ENCODE measurements at regions of chr7 and their contacts with region 1.

Region 1: GRCh38 chr7:66920769-66921395 is at the start of gene TMEM248:
- DNase-seq: peak; percentile 96
- ATAC-seq: peak; percentile 90
- H3K4me3 Mint-ChIP-seq: peak within 1 kb of the TSS; percentile 99
- H3K27ac Mint-ChIP-seq: peak within 1 kb of the TSS; percentile 98
- H3K4me1 Mint-ChIP-seq: peaks cover 33% of the 10 kb centered on the region
- H3K27me3 Mint-ChIP-seq: no peaks in the 10 kb centered on the region
- total RNA-seq, gene TMEM248: 70.5 to 85.8 TPM

Region 2: DNA sequence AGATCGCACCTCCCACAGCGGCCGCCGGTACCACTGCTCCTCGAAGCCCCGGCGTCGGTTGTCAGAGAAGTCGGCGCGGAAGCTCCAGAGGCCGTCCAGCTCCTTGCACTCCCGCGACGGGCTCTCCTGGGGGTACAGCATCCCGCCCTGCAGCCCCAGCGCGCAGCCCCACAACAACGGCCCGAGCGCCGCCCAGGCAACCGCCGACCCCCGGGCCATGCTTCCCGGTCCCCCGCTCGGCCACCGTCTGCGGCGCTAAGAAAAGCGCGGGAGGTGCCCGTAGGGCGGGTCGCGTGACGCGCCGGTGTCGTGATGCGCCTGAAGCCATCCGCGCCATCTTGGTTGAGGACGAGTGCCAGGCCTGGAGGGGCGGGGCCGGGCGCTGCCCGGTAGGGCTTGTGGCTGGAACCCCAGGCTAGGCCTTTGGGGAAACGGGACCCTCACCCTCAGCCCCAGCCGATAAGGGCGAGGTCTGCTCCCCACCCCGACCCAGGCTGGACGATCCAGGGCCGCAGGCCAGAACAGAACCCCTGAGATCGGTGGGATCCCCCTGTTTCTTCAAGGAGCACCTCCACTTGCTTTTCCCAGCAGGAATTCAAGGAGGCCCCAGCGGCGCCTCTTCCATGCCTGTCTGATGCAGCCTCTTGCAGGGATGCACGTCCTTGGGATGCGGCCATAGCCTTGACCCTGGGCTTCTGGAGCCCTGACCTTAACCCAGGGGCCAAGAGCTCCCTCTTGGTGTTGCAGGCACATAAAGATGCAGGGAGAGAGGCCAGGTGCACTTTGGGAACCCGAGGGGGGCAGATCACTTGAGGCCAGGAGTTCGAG is 938.7 kb before region 1 on chr7 and contains the start of gene GUSB:
- CTCF ChIA-PET with region 1: no interaction called
- POLR2A ChIA-PET with region 1: no interaction called
- intact Hi-C with region 1: loop called in 1 of 2 experiments (anchors 2 kb)
- DNase-seq: peak; percentile 95
- ATAC-seq: peak; percentile 90
- H3K4me3 Mint-ChIP-seq: peak within 1 kb of the TSS; percentile 80
- H3K27ac Mint-ChIP-seq: peak within 1 kb of the TSS; percentile 90
- H3K4me1 Mint-ChIP-seq: peaks cover 8% of the 10 kb centered on the region
- H3K27me3 Mint-ChIP-seq: no peaks in the 10 kb centered on the region
- total RNA-seq, gene GUSB: 41.8 to 43.2 TPM

Region 3: GRCh38 chr7:66681491-66682349 is 239.2 kb before region 1 on chr7:
- CTCF ChIA-PET with region 1: no interaction called
- POLR2A ChIA-PET with region 1: no interaction called
- intact Hi-C with region 1: loop called in 1 of 2 experiments (anchors 2 kb)
- DNase-seq: peak; percentile 98
- ATAC-seq: peak; percentile 95
- H3K4me3 Mint-ChIP-seq: peak overlapping the region; percentile 90
- H3K27ac Mint-ChIP-seq: peak overlapping the region; percentile 92
- H3K4me1 Mint-ChIP-seq: peaks cover 34% of the 10 kb centered on the region
- H3K27me3 Mint-ChIP-seq: no peaks in the 10 kb centered on the region

Region 4: GRCh38 chr7:66837007-66837406 is 83.9 kb before region 1 on chr7:
- CTCF ChIA-PET with region 1: no interaction called
- POLR2A ChIA-PET with region 1: no interaction called
- intact Hi-C with region 1: loop called in 1 of 2 experiments (anchors 2 kb)
- DNase-seq: peak; percentile 81
- ATAC-seq: peak; percentile 94
- H3K4me3 Mint-ChIP-seq: no peak overlapping the region
- H3K27ac Mint-ChIP-seq: no peak overlapping the region
- H3K4me1 Mint-ChIP-seq: no peaks in the 10 kb centered on the region
- H3K27me3 Mint-ChIP-seq: no peaks in the 10 kb centered on the region

Region 5: DNA sequence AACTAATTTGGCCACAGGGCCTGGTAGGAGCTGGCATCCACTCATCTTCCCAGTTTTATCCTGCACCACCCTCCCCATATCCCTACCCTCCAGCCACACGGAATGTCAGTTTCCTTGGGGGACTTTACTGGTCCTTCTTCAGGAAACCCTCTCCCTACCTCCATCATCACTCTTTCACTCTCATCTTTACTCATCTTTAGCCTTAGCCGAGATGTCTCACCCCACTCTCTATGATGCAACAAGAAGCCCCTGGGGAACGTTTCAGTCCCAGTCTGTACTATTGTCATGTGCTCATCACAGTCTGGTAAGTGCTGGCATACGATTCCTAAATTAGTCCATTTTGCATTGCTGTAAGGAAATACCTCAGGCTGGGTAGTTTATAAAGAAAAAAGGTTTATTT is 34.7 kb before region 1 on chr7:
- CTCF ChIA-PET with region 1: no interaction called
- POLR2A ChIA-PET with region 1: interaction called, 3 read pairs
- intact Hi-C with region 1: loop called in 1 of 2 experiments (anchors 1 kb)
- DNase-seq: peak; percentile 33
- ATAC-seq: peak; percentile 13
- H3K4me3 Mint-ChIP-seq: no peak overlapping the region
- H3K27ac Mint-ChIP-seq: peak overlapping the region; percentile 72
- H3K4me1 Mint-ChIP-seq: peaks cover 44% of the 10 kb centered on the region
- H3K27me3 Mint-ChIP-seq: no peaks in the 10 kb centered on the region

Measured in activated CD4-positive, alpha-beta T cell treated with anti-CD3 and anti-CD28 coated beads for 36 hours (primary cell).